Activated naive CD4-positive, alpha-beta T cell treated with anti-CD3 and anti-CD28 coated beads for 36 hours (primary cell): ENCODE measurements at regions of chr1 and their contacts with region 1.

Region 1: GRCh38 chr1:241611063-241611462 is 29.1 kb downstream of the CHML start:
- DNase-seq: peak; percentile 11
- H3K4me3 Mint-ChIP-seq: no peak overlapping the region
- H3K27ac Mint-ChIP-seq: no peak overlapping the region
- H3K4me1 Mint-ChIP-seq: peaks cover 15% of the 10 kb centered on the region
- H3K27me3 Mint-ChIP-seq: no peaks in the 10 kb centered on the region

Region 2: GRCh38 chr1:241592273-241592958 is 18.6 kb before region 1 on chr1:
- CTCF ChIA-PET with region 1: interaction called, 14 read pairs
- intact Hi-C with region 1: loop called (anchors 1 kb)
- DNase-seq: peak; percentile 7
- H3K4me3 Mint-ChIP-seq: no peak overlapping the region
- H3K27ac Mint-ChIP-seq: peak overlapping the region; percentile 79
- H3K4me1 Mint-ChIP-seq: peaks cover 29% of the 10 kb centered on the region
- H3K27me3 Mint-ChIP-seq: no peaks in the 10 kb centered on the region

Region 3: GRCh38 chr1:241640029-241640818 is 29.2 kb after region 1 on chr1 and contains the starts of genes CHML and OPN3:
- CTCF ChIA-PET with region 1: interaction called, 5 read pairs
- intact Hi-C with region 1: loop called (anchors 1 kb)
- DNase-seq: peak; percentile 93
- H3K4me3 Mint-ChIP-seq: peak within 1 kb of the TSS; percentile 74
- H3K27ac Mint-ChIP-seq: peak within 1 kb of the TSS; percentile 81
- H3K4me1 Mint-ChIP-seq: peaks cover 39% of the 10 kb centered on the region
- H3K27me3 Mint-ChIP-seq: no peaks in the 10 kb centered on the region
- total RNA-seq, gene CHML: 19.9 to 21.1 TPM
- total RNA-seq, gene OPN3: 7.7 to 9.0 TPM

Region 4: DNA sequence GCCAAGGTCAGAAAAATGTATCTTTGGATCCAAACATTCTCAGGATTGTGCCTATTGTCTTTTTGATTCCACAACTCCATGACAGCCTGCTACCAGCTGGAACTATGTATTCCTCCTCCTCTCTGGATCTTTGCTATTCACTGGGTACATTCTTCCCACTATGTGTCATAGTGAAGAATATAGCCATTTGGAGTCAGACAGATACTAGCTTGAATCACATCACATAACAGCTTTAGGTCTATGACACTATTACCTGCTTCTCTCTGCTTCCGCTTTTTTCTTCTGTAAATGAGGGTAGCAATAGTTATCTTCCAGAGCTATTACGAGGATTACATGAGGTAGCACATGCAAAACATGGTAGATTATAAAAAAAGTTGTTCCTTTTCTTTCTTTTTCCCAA is 231.5 kb after region 1 on chr1:
- CTCF ChIA-PET with region 1: interaction called, 13 read pairs
- intact Hi-C with region 1: loop called (anchors 1 kb)
- DNase-seq: no peak
- H3K4me3 Mint-ChIP-seq: no peak overlapping the region
- H3K27ac Mint-ChIP-seq: no peak overlapping the region
- H3K4me1 Mint-ChIP-seq: peaks cover 20% of the 10 kb centered on the region
- H3K27me3 Mint-ChIP-seq: no peaks in the 10 kb centered on the region

Region 5: GRCh38 chr1:241860922-241861321 is 249.9 kb after region 1 on chr1:
- CTCF ChIA-PET with region 1: interaction called, 10 read pairs
- intact Hi-C with region 1: no loop called
- DNase-seq: no peak
- H3K4me3 Mint-ChIP-seq: no peak overlapping the region
- H3K27ac Mint-ChIP-seq: no peak overlapping the region
- H3K4me1 Mint-ChIP-seq: no peaks in the 10 kb centered on the region
- H3K27me3 Mint-ChIP-seq: no peaks in the 10 kb centered on the region

Region 6: DNA sequence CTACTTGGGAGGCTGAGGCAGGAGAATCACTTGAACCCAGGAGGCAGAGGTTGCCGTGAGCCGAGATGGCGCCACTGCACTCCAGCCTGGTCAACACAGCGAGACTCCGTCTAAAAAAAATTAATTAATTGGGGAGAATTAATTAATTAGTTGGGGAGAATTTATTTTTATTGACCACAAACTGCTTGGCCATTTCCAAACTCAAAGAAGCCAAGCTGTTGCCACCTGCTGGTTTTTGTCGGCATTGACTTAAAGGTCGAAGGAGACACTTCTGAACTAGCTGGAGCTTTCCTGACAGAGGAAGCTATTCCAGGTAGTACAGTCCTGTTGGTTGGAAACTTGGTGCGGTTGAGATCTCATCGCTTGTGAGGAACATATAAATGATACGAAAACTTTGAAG is 374.7 kb after region 1 on chr1:
- CTCF ChIA-PET with region 1: interaction called, 5 read pairs
- intact Hi-C with region 1: loop called (anchors 2 kb)
- DNase-seq: peak; percentile 43
- H3K4me3 Mint-ChIP-seq: no peak overlapping the region
- H3K27ac Mint-ChIP-seq: no peak overlapping the region
- H3K4me1 Mint-ChIP-seq: no peaks in the 10 kb centered on the region
- H3K27me3 Mint-ChIP-seq: no peaks in the 10 kb centered on the region

Region 7: DNA sequence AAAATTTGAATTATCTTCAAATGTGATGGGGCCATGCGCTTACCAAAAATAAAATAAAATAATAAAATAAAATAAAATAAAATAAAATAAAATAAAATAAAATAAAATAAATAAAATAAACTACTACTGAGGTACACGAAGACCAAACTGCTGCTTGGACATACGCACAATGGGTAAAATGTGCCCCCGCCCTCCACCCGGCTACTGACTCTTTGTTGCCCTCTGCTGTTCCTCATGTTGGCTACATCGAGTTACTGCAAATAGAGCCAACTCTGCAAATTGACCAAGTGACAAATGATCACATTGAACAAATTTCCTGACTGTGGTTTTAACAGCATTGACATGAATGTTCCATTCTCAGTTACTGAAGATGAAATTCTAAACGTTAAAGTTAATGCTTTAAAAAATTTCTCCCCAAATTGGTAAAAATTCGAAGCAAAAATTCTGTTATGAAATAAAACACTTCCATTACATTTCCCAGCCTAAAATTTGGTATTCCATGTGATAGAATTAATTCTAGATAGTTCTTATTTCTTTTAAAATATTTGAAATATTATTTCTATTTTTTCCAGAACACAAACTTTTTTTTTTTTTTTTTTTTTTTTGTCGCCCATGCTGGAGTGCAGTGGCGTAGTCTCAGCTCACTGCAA is 406.6 kb after region 1 on chr1:
- CTCF ChIA-PET with region 1: interaction called, 4 read pairs
- intact Hi-C with region 1: loop called (anchors 1 kb)
- DNase-seq: peak; percentile 43
- H3K4me3 Mint-ChIP-seq: no peak overlapping the region
- H3K27ac Mint-ChIP-seq: no peak overlapping the region
- H3K4me1 Mint-ChIP-seq: no peaks in the 10 kb centered on the region
- H3K27me3 Mint-ChIP-seq: no peaks in the 10 kb centered on the region

Region 8: GRCh38 chr1:242197907-242198815 is 587.1 kb after region 1 on chr1:
- CTCF ChIA-PET with region 1: no interaction called
- intact Hi-C with region 1: no loop called
- DNase-seq: no peak
- H3K4me3 Mint-ChIP-seq: no peak overlapping the region
- H3K27ac Mint-ChIP-seq: no peak overlapping the region
- H3K4me1 Mint-ChIP-seq: no peaks in the 10 kb centered on the region
- H3K27me3 Mint-ChIP-seq: peaks cover 2% of the 10 kb centered on the region